Activated CD8-positive, alpha-beta memory T cell treated with anti-CD3 and anti-CD28 coated beads, Interleukin-2, amount 10 ng/mL, durations not matched to agents 7 days and 5 days (primary cell): ENCODE measurements at regions of chr2 and their contacts with region 1.

Region 1: GRCh38 chr2:75655861-75656260 is 9.3 kb downstream of the MRPL19 start:
- DNase-seq: no peak
- ATAC-seq: no peak
- H3K4me3 Mint-ChIP-seq: no peak overlapping the region
- H3K27ac Mint-ChIP-seq: no peak overlapping the region
- H3K4me1 Mint-ChIP-seq: peaks cover 9% of the 10 kb centered on the region
- H3K27me3 Mint-ChIP-seq: no peaks in the 10 kb centered on the region

Region 2: DNA sequence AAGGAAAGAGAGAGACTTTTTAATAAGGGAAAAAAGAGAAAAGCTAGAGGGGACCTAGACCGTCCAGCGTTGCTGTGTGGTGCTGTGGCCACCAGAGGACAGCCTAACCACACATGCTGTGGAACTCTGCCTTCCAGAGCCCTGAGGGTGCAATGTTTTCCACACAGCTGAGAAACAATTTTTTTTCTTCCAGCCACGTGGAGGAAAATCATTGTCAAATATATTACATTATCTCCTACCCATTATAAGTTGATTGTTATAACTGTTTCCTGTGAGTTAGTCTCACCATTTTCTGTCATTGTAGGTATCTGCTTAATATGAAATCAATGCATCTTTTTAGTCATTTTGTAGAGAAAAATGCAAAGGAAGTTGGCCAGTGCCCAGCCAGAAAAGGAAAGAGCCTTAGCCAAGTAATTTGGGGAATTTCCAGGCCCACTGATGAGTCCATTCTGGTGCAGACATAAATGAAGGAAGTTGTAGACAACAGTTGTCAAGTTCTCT is 15.2 kb before region 1 on chr2:
- CTCF ChIA-PET with region 1: interaction called, 10 read pairs
- DNase-seq: peak; percentile 68
- ATAC-seq: peak; percentile 89
- H3K4me3 Mint-ChIP-seq: no peak overlapping the region
- H3K27ac Mint-ChIP-seq: no peak overlapping the region
- H3K4me1 Mint-ChIP-seq: no peaks in the 10 kb centered on the region
- H3K27me3 Mint-ChIP-seq: peaks cover 22% of the 10 kb centered on the region

Region 3: GRCh38 chr2:75862547-75862946 is 206.7 kb after region 1 on chr2:
- CTCF ChIA-PET with region 1: no interaction called
- DNase-seq: no peak
- ATAC-seq: no peak
- H3K4me3 Mint-ChIP-seq: no peak overlapping the region
- H3K27ac Mint-ChIP-seq: no peak overlapping the region
- H3K4me1 Mint-ChIP-seq: no peaks in the 10 kb centered on the region
- H3K27me3 Mint-ChIP-seq: no peaks in the 10 kb centered on the region